ENCODE measurements at regions of chr13 and their contacts with region 1.

Region 1: DNA sequence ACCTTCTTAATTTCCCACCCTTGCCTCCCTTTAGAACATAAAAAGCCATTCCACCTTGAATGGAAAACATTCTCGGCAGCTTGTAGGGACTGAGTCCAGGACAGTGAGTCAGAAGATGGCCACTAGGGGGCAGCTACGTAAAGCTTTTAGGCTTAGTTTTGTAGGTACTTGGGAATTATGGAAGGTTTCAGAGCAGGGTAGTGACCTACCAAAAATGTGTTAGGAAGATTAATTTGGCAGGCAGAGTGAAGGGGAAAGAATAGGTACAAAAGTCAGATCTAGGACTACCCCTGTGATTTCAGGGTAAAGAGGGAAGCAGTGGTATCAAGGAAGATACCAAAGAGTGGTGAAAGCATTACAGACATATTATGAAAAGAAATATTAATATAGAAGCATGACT is 198.4 kb downstream of the NDFIP2 start:
- DNase-seq: no peak
- ATAC-seq: peak; percentile 87
- H3K4me3 ChIP-seq: no peak overlapping the region
- H3K27ac ChIP-seq: no peak overlapping the region
- H3K4me1 ChIP-seq: no peaks in the 10 kb centered on the region
- H3K27me3 ChIP-seq: no peaks in the 10 kb centered on the region
- CTCF ChIP-seq: peak; percentile 70 to 90 (median 83)
- EP300 ChIP-seq: no peak
- POLR2A ChIP-seq: no peak
- RAD21 ChIP-seq: peak; percentile 88

Region 2: GRCh38 chr13:79541426-79542049 is 137.8 kb before region 1 on chr13:
- CTCF ChIA-PET with region 1: interaction called, 11 read pairs
- POLR2A ChIA-PET with region 1: no interaction called
- RAD21 ChIA-PET with region 1: interaction called, 9 read pairs
- SMC1A ChIA-PET with region 1: interaction called, 5 read pairs
- in situ Hi-C with region 1: no loop called
- intact Hi-C with region 1: no loop called
- DNase-seq: peak; percentile 49
- ATAC-seq: peak; percentile 73
- H3K4me3 ChIP-seq: no peak overlapping the region
- H3K27ac ChIP-seq: no peak overlapping the region
- H3K4me1 ChIP-seq: no peaks in the 10 kb centered on the region
- H3K27me3 ChIP-seq: no peaks in the 10 kb centered on the region
- CTCF ChIP-seq: peak; percentile 57 to 69 (median 59)
- EP300 ChIP-seq: no peak
- POLR2A ChIP-seq: no peak
- RAD21 ChIP-seq: peak; percentile 95

Region 3: GRCh38 chr13:79647538-79647937 is 31.8 kb before region 1 on chr13:
- CTCF ChIA-PET with region 1: interaction called, 12 read pairs
- POLR2A ChIA-PET with region 1: no interaction called
- RAD21 ChIA-PET with region 1: interaction called, 8 read pairs
- SMC1A ChIA-PET with region 1: interaction called, 19 read pairs
- in situ Hi-C with region 1: no loop called
- intact Hi-C with region 1: no loop called
- DNase-seq: no peak
- ATAC-seq: peak; percentile 30
- H3K4me3 ChIP-seq: no peak overlapping the region
- H3K27ac ChIP-seq: no peak overlapping the region
- H3K4me1 ChIP-seq: no peaks in the 10 kb centered on the region
- H3K27me3 ChIP-seq: peaks cover 0 to 2% of the 10 kb centered on the region in 2 experiments; a peak in 2 of 4 replicates
- CTCF ChIP-seq: no peak
- EP300 ChIP-seq: no peak
- POLR2A ChIP-seq: no peak
- RAD21 ChIP-seq: no peak

Region 4: DNA sequence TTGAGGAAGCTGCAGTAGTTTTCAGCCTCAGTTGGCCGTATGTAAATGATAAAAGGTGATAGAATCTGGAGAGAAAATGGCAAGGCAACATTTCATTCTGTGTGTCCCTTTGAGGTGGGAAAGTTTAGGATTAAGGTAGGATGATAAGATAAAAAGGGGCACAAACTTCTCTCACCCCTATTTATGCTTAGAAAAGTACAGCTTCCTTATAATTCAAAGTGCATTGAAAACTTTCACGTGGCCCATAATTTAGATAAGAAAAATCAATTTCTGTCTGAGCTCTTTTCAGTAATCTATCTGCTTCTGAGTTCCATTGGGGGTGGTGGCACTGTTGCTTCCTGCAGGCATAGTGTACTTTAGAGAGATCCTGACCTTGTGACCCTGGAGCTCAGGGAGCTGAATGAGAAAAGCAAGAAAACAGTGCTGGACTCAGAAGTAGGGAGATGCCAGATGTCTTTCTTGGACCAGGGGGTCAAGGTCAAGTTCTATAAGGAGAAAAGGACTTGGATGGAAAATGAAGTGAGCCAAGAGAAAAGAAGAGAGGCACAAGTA is 11.1 kb before region 1 on chr13:
- CTCF ChIA-PET with region 1: interaction called, 44 read pairs
- POLR2A ChIA-PET with region 1: no interaction called
- RAD21 ChIA-PET with region 1: interaction called, 16 read pairs
- SMC1A ChIA-PET with region 1: interaction called, 16 read pairs
- in situ Hi-C with region 1: no loop called
- intact Hi-C with region 1: no loop called
- DNase-seq: no peak
- ATAC-seq: no peak
- H3K4me3 ChIP-seq: no peak overlapping the region
- H3K27ac ChIP-seq: no peak overlapping the region
- H3K4me1 ChIP-seq: no peaks in the 10 kb centered on the region
- H3K27me3 ChIP-seq: no peaks in the 10 kb centered on the region
- CTCF ChIP-seq: no peak
- EP300 ChIP-seq: no peak
- POLR2A ChIP-seq: no peak
- RAD21 ChIP-seq: no peak

Region 5: GRCh38 chr13:79749984-79750551 is 70.7 kb after region 1 on chr13:
- CTCF ChIA-PET with region 1: interaction called, 16 read pairs
- POLR2A ChIA-PET with region 1: no interaction called
- RAD21 ChIA-PET with region 1: interaction called, 4 read pairs
- SMC1A ChIA-PET with region 1: interaction called, 3 read pairs
- in situ Hi-C with region 1: no loop called
- intact Hi-C with region 1: no loop called
- DNase-seq: no peak
- ATAC-seq: no peak
- H3K4me3 ChIP-seq: no peak overlapping the region
- H3K27ac ChIP-seq: no peak overlapping the region
- H3K4me1 ChIP-seq: no peaks in the 10 kb centered on the region
- H3K27me3 ChIP-seq: no peaks in the 10 kb centered on the region
- CTCF ChIP-seq: no peak
- EP300 ChIP-seq: no peak
- POLR2A ChIP-seq: no peak
- RAD21 ChIP-seq: no peak

Region 6: DNA sequence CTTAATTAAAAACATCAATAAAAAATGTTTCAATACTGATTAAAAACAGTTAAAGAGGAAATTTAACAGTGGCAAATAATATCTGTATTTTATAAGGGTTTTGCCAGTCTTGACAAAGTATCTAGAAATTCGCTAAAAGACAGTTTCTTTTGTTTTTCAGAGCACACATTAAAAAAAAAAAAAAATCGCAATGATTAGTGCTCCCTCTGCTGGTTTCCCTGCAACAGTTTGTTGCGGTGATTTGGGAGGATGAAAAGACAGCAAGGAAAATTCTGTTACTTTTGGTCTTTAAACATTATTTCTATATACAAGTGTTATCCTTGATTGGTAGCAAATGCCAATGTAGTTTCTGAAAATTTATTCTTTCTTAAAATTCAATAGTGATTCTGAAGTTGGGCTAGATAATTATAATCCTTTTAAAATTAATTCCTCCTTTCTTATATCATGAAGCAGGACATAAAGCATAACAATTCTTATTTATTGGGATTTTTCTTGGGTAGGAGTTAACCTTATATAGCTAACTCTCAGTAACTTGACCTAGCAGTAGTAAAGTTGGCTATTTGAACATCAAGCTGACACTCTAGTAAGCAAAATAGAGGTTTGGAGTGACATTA is 684.7 kb after region 1 on chr13:
- CTCF ChIA-PET with region 1: interaction called, 13 read pairs
- POLR2A ChIA-PET with region 1: no interaction called
- RAD21 ChIA-PET with region 1: interaction called, 12 read pairs
- SMC1A ChIA-PET with region 1: interaction called, 18 read pairs
- in situ Hi-C with region 1: loop called (anchors 10 kb)
- intact Hi-C with region 1: loop called (anchors 1 kb)
- DNase-seq: no peak
- ATAC-seq: no peak
- H3K4me3 ChIP-seq: no peak overlapping the region
- H3K27ac ChIP-seq: no peak overlapping the region
- H3K4me1 ChIP-seq: no peaks in the 10 kb centered on the region
- H3K27me3 ChIP-seq: no peaks in the 10 kb centered on the region
- CTCF ChIP-seq: peak; percentile 62 to 70 (median 62); a peak in 5 of 6 replicates
- EP300 ChIP-seq: no peak
- POLR2A ChIP-seq: no peak
- RAD21 ChIP-seq: peak; percentile 80